Ovary (tissue), 10 donors: ENCODE measurements at regions of chr5 and their contacts with region 1.

Region 1: DNA sequence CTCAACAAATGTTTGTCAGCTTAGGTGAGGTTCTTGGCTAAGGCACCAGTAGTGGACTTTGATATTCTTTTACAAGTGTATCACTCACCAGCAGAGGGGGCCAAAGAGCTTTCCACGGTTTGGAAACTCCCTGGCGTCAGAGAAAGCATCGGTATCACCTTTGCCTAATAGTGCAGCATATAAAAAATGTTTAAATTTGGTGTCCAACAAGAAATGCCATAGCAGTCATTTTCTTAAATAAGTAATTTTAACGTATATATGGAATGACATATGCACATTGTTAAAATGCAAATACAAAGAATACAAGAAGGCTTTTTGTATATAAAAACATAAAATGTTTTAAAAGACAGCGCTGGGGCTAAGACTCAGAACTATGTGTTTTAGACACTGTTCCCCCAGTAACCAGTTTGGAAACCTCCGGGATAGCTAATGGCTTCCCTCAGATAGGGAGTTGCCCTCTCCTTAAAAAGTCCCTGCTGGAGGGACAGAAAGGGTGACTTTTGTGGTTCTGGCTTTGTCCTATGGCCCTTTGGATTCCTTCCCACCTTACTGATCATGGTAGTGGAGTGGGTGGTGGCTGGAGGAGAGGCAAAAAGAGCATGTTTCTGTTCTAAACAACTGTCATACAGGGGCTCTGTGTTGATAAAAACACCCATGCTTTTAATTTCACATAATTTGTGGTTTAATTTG is 124.6 kb downstream of the GPBP1 start:
- DNase-seq: peak; percentile 78 to 92 (median 81)
- H3K4me3 ChIP-seq: no peak overlapping the region
- H3K27ac ChIP-seq: no peak overlapping the region
- H3K4me1 ChIP-seq: peaks cover 2% of the 10 kb centered on the region
- H3K27me3 ChIP-seq: no peaks in the 10 kb centered on the region
- CTCF ChIP-seq: peak; percentile 73 to 79 (median 76)
- EP300 ChIP-seq: no peak
- POLR2A ChIP-seq: no peak

Region 2: GRCh38 chr5:57499262-57500050 is 201.0 kb after region 1 on chr5:
- intact Hi-C with region 1: loop called in 1 of 4 experiments (anchors 10 kb)
- DNase-seq: no peak
- H3K4me3 ChIP-seq: no peak overlapping the region
- H3K27ac ChIP-seq: no peak overlapping the region
- H3K4me1 ChIP-seq: peaks cover 7% of the 10 kb centered on the region
- H3K27me3 ChIP-seq: no peaks in the 10 kb centered on the region
- CTCF ChIP-seq: peak in 2 of 3 donors; percentile 24 to 46
- EP300 ChIP-seq: no peak
- POLR2A ChIP-seq: no peak

Region 3: GRCh38 chr5:57779383-57780223 is 481.2 kb after region 1 on chr5:
- intact Hi-C with region 1: loop called in 3 of 4 experiments (anchors 5 to 10 kb)
- DNase-seq: peak in 4 of 5 donors; percentile 13 to 31 (median 22)
- H3K4me3 ChIP-seq: no peak overlapping the region
- H3K27ac ChIP-seq: no peak overlapping the region
- H3K4me1 ChIP-seq: peaks cover 3% of the 10 kb centered on the region
- H3K27me3 ChIP-seq: no peaks in the 10 kb centered on the region
- CTCF ChIP-seq: peak in 1 of 3 donors; percentile 55
- EP300 ChIP-seq: no peak
- POLR2A ChIP-seq: no peak

Region 4: GRCh38 chr5:57887851-57888621 is 589.6 kb after region 1 on chr5:
- intact Hi-C with region 1: loop called in 1 of 4 experiments (anchors 10 kb)
- DNase-seq: peak in 4 of 5 donors; percentile 18 to 36 (median 23)
- H3K4me3 ChIP-seq: no peak overlapping the region
- H3K27ac ChIP-seq: no peak overlapping the region
- H3K4me1 ChIP-seq: no peaks in the 10 kb centered on the region
- H3K27me3 ChIP-seq: no peaks in the 10 kb centered on the region
- CTCF ChIP-seq: peak in 1 of 3 donors; percentile 7
- EP300 ChIP-seq: no peak
- POLR2A ChIP-seq: no peak

Region 5: DNA sequence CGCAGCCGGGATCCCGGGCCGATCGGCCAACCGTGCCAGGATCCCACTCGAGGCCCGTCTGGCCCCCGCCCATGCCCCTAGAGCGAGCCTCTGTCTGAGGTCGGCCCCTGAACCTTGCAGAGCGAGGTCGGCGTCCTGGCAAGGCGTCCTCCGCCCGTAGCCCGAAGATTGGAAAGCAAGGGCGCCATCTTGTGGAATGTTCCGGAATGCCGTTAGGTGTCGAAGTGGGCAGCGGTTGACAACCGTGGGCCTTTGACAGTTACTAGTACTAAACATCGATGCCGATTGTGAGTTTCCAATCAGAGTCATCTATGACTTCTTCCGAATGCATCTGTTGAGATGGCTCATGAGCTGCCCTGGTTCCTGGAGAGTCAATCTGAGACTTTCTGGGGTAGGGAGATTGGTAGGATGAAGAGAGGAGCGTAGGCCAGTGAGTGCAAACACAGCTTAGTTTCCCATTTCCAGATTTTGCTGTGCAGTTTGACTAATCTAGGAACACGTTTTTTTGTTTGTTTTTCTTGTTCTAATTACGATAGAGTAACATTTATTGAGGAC is 1162.4 kb after region 1 on chr5:
- intact Hi-C with region 1: loop called (anchors 1 to 5 kb)
- DNase-seq: peak; percentile 87 to 94 (median 93)
- H3K4me3 ChIP-seq: peak overlapping the region; percentile 80
- H3K27ac ChIP-seq: peak overlapping the region; percentile 76 to 94
- H3K4me1 ChIP-seq: peaks cover 2% of the 10 kb centered on the region
- H3K27me3 ChIP-seq: no peaks in the 10 kb centered on the region
- CTCF ChIP-seq: peak; percentile 65 to 82 (median 79)
- EP300 ChIP-seq: no peak
- POLR2A ChIP-seq: no peak